ENCODE measurements at regions of chr11 and their contacts with region 1.

Region 1: DNA sequence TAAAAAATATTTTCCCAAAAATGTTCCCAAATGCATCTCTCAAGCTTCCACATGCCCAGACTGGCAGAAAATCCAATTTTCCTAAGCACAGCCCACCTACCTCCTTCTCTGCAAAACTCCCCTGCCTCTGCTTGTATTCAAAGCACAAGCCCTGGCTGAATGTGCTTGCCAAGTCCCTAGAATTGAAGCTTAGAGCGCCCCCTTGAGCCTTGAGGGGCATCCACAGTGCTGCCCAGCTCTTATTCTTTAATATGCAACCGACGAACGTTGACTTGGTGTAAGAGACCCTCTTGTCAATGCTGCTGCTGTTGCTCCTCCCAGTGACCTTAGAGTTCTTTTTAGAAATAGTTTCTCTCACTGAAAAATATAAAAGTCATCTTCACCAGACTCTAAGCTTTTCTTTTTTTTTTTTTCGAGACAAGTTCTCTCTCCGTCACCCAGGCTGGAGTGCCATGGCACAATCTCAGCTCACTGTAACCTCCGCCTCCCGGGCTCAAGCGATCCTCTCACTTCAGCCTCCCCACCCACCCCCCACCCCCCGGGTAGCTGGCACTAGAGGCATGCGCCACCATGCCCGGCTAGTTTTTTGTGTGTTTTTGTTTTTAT is 63.5 kb upstream of the CAPRIN1 start:
- DNase-seq: peak; percentile 83
- ATAC-seq: peak; percentile 84
- H3K4me3 ChIP-seq: no peak overlapping the region
- H3K4me3 Mint-ChIP-seq: no peak overlapping the region
- H3K27ac ChIP-seq: no peak overlapping the region
- H3K27ac Mint-ChIP-seq: no peak overlapping the region
- H3K4me1 ChIP-seq: no peaks in the 10 kb centered on the region
- H3K4me1 Mint-ChIP-seq: no peaks in the 10 kb centered on the region
- H3K27me3 ChIP-seq: peaks cover 0 to 5% (median 0%) of the 10 kb centered on the region in 4 experiments
- H3K27me3 Mint-ChIP-seq: no peaks in the 10 kb centered on the region
- CTCF ChIP-seq: peak; percentile 86

Region 2: GRCh38 chr11:33808228-33808828 is 179.8 kb before region 1 on chr11:
- CTCF ChIA-PET with region 1: interaction called, 58 read pairs
- POLR2A ChIA-PET with region 1: no interaction called
- intact Hi-C with region 1: loop called (anchors 1 kb)
- DNase-seq: peak; percentile 85
- ATAC-seq: peak; percentile 95
- H3K4me3 ChIP-seq: no peak overlapping the region
- H3K4me3 Mint-ChIP-seq: no peak overlapping the region
- H3K27ac ChIP-seq: no peak overlapping the region
- H3K27ac Mint-ChIP-seq: no peak overlapping the region
- H3K4me1 ChIP-seq: no peaks in the 10 kb centered on the region
- H3K4me1 Mint-ChIP-seq: no peaks in the 10 kb centered on the region
- H3K27me3 ChIP-seq: peaks cover 0 to 6% (median 1%) of the 10 kb centered on the region in 4 experiments
- H3K27me3 Mint-ChIP-seq: peaks cover 21% of the 10 kb centered on the region
- CTCF ChIP-seq: peak; percentile 95

Region 3: DNA sequence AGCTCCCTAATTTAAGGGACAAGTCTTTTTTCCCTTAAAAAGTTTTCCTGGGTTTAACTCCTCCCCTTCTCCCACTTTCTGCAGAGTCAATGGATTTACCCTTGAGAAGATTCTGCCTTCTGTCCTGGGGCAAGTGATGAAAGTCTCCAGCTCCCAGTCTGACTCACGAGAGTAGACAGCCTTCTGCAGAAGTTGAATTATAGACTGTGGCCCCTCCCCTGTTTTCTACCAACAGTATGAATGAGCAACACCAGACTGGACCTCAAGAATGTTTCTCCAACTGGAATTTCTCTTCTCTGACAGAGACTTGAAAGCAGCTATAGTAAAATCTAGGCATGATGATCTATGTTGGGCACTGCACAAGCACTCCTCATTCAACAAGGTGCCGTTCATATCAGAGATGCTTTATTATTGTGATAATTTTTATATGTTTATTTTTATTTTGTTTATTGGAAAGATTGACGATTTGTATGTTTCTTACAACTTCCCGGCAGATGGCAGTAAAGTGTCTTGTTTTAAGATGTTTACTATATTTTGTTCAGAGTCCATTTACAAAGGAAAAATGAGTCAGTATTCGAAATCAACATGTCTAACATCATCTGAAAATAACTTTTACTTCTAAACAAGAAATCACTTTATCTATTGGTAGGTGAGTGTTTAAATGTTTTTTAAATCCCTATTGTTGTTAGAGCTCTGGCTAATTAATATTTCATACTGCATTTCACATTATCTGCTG is 152.8 kb before region 1 on chr11:
- CTCF ChIA-PET with region 1: interaction called, 22 read pairs
- POLR2A ChIA-PET with region 1: no interaction called
- intact Hi-C with region 1: no loop called
- DNase-seq: peak; percentile 18
- ATAC-seq: no peak
- H3K4me3 ChIP-seq: no peak overlapping the region
- H3K4me3 Mint-ChIP-seq: no peak overlapping the region
- H3K27ac ChIP-seq: no peak overlapping the region
- H3K27ac Mint-ChIP-seq: no peak overlapping the region
- H3K4me1 ChIP-seq: no peaks in the 10 kb centered on the region
- H3K4me1 Mint-ChIP-seq: no peaks in the 10 kb centered on the region
- H3K27me3 ChIP-seq: peaks cover 0 to 10% (median 2%) of the 10 kb centered on the region in 4 experiments
- H3K27me3 Mint-ChIP-seq: peaks cover 38% of the 10 kb centered on the region
- CTCF ChIP-seq: peak; percentile 28

Region 4: GRCh38 chr11:33857933-33858371 is 130.1 kb before region 1 on chr11:
- CTCF ChIA-PET with region 1: interaction called, 89 read pairs
- POLR2A ChIA-PET with region 1: no interaction called
- intact Hi-C with region 1: loop called (anchors 1 kb)
- DNase-seq: peak; percentile 86
- ATAC-seq: peak; percentile 96
- H3K4me3 ChIP-seq: no peak overlapping the region
- H3K4me3 Mint-ChIP-seq: no peak overlapping the region
- H3K27ac ChIP-seq: no peak overlapping the region
- H3K27ac Mint-ChIP-seq: no peak overlapping the region
- H3K4me1 ChIP-seq: no peaks in the 10 kb centered on the region
- H3K4me1 Mint-ChIP-seq: peaks cover 6% of the 10 kb centered on the region
- H3K27me3 ChIP-seq: no peaks in the 10 kb centered on the region
- H3K27me3 Mint-ChIP-seq: no peaks in the 10 kb centered on the region
- CTCF ChIP-seq: peak; percentile 93

Region 5: GRCh38 chr11:34002268-34002807 is 14.3 kb after region 1 on chr11:
- CTCF ChIA-PET with region 1: interaction called, 14 read pairs
- POLR2A ChIA-PET with region 1: no interaction called
- intact Hi-C with region 1: no loop called
- DNase-seq: no peak
- ATAC-seq: no peak
- H3K4me3 ChIP-seq: no peak overlapping the region
- H3K4me3 Mint-ChIP-seq: no peak overlapping the region
- H3K27ac ChIP-seq: no peak overlapping the region
- H3K27ac Mint-ChIP-seq: no peak overlapping the region
- H3K4me1 ChIP-seq: peaks cover under 1 to 7% of the 10 kb centered on the region in 2 donors
- H3K4me1 Mint-ChIP-seq: peaks cover 6% of the 10 kb centered on the region
- H3K27me3 ChIP-seq: peaks cover 0 to 16% (median 8%) of the 10 kb centered on the region in 4 experiments
- H3K27me3 Mint-ChIP-seq: peaks cover 25% of the 10 kb centered on the region
- CTCF ChIP-seq: no peak

Region 6: DNA sequence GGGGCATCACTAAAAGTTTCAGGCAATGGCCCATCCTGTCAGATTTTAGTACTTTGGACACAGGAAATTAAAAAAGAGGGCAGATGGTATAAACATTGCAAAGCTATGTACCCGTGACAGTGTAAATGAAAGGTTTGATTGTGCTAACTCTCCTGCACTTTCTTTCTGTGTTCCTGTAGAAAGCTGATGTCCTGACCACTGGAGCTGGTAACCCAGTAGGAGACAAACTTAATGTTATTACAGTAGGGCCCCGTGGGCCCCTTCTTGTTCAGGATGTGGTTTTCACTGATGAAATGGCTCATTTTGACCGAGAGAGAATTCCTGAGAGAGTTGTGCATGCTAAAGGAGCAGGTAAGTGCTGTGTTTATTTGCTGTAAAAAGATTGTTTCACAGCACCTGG is 460.9 kb after region 1 on chr11:
- CTCF ChIA-PET with region 1: no interaction called
- POLR2A ChIA-PET with region 1: no interaction called
- intact Hi-C with region 1: no loop called
- DNase-seq: no peak
- ATAC-seq: no peak
- H3K4me3 ChIP-seq: no peak overlapping the region
- H3K4me3 Mint-ChIP-seq: peak overlapping the region; percentile 10
- H3K27ac ChIP-seq: no peak overlapping the region
- H3K27ac Mint-ChIP-seq: peak overlapping the region; percentile 2
- H3K4me1 ChIP-seq: peaks cover 29 to 30% of the 10 kb centered on the region in 2 donors
- H3K4me1 Mint-ChIP-seq: peaks cover 45% of the 10 kb centered on the region
- H3K27me3 ChIP-seq: no peaks in the 10 kb centered on the region
- H3K27me3 Mint-ChIP-seq: no peaks in the 10 kb centered on the region
- CTCF ChIP-seq: no peak

Measured in B cell (primary cell).